Aorta (tissue), 5 donors: ENCODE measurements at regions of chr1 and their contacts with region 1.

Region 1: GRCh38 chr1:91929250-91929649 is 20.0 kb upstream of the BRDT start:
- DNase-seq: no peak
- ATAC-seq: no peak
- H3K4me3 ChIP-seq: no peak overlapping the region
- H3K27ac ChIP-seq: no peak overlapping the region
- H3K4me1 ChIP-seq: no peaks in the 10 kb centered on the region
- H3K27me3 ChIP-seq: no peaks in the 10 kb centered on the region

Region 2: DNA sequence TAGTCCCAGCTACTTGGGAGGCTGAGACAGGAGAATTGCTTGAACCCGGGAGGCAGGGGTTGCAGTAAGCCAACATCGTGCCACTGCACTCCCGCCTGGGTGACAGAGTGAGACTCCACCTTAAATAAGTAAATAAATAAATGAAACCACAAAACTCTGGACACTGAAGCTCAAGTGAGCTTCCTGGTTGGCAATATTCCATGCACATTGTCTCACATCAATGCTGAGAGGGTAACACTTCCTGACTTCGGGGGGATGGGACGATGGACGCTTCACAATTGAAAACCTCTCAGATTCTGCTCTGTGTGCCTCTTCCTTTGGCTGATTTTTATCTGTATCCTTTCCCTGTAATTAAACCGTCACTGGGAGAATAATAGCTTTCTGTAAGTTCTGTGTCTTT is 837.4 kb before region 1 on chr1:
- intact Hi-C with region 1: no loop called
- DNase-seq: no peak
- ATAC-seq: no peak
- H3K4me3 ChIP-seq: no peak overlapping the region
- H3K27ac ChIP-seq: no peak overlapping the region
- H3K4me1 ChIP-seq: no peaks in the 10 kb centered on the region
- H3K27me3 ChIP-seq: no peaks in the 10 kb centered on the region

Region 3: GRCh38 chr1:91282695-91283420 is 646.4 kb before region 1 on chr1:
- intact Hi-C with region 1: loop called (anchors 5 kb)
- DNase-seq: no peak
- ATAC-seq: peak; percentile 86
- H3K4me3 ChIP-seq: no peak overlapping the region
- H3K27ac ChIP-seq: no peak overlapping the region
- H3K4me1 ChIP-seq: peaks cover 0 to 2% of the 10 kb centered on the region in 2 donors
- H3K27me3 ChIP-seq: no peaks in the 10 kb centered on the region

Region 4: GRCh38 chr1:91511386-91511785 is 417.9 kb before region 1 on chr1:
- intact Hi-C with region 1: loop called (anchors 1 to 5 kb)
- DNase-seq: no peak
- ATAC-seq: no peak
- H3K4me3 ChIP-seq: no peak overlapping the region
- H3K27ac ChIP-seq: no peak overlapping the region
- H3K4me1 ChIP-seq: no peaks in the 10 kb centered on the region
- H3K27me3 ChIP-seq: no peaks in the 10 kb centered on the region

Region 5: DNA sequence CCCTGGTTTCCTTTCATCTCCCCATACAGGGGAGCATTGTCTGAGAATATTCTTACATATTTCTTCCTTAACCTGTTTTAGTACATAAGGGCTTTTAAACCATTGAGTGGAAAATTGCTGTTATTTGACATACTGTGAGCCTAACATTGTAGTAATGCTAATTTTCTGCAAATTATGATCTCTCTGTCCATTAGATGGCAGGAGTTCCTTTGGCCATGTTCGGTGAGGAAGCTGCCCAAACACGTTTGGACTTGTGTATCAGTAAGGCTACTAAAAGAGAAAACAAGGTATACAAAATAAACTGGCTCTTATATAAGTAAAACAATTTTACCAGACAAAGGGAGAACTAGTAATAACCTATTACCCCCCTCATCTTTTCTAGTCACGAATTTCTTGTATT is 399.4 kb before region 1 on chr1:
- intact Hi-C with region 1: loop called (anchors 5 kb)
- DNase-seq: no peak
- ATAC-seq: no peak
- H3K4me3 ChIP-seq: no peak overlapping the region
- H3K27ac ChIP-seq: no peak overlapping the region
- H3K4me1 ChIP-seq: no peaks in the 10 kb centered on the region
- H3K27me3 ChIP-seq: no peaks in the 10 kb centered on the region